Naive thymus-derived CD4-positive, alpha-beta T cell (primary cell): ENCODE measurements at regions of chr1 and their contacts with region 1.

Region 1: DNA sequence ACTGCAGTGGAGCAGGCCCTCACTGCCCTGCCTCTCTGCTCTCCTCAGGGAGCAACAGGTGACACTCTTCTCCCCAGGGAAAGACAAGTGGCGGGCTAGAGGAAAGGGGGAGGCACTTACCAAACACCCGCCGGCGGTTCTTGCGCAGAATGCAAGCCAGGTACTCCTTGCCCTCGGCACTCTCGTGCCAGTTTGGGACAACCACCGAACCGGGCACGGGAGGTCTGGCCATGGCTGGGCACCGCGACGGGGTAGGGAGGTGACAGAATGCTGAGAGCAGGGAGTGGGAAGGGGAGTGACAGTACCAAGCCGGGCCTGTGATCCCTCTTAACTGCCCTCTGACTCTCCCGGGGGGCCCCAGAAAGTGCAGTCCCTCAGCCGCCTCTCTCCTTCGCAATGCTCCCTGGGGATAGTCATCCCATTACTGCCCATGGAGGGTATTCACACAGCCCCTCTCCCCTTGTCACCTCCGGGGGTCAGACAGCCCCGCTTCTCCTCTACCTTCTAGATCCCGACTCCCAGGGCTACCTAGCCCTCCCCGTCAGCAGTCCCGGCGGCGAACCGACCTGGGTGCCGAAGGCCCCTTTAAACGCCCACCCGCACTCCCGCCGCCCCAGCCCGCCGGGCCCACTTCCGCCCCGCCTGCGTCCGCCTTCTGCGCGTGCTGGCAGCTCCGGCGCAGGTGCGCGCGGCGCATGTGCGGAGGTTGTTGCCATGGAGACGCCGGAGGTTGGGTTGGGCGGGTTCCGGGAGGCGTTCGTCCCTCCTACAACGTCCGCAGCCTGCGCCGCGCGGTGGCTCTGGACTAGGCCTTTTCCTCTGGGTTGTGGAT is at the start of gene CPLANE2:
- DNase-seq: peak; percentile 91 to 99 (median 94)
- ATAC-seq: peak; percentile 89
- H3K4me3 ChIP-seq: peak within 1 kb of the TSS; percentile 94
- H3K4me3 Mint-ChIP-seq: peak within 1 kb of the TSS; percentile 85 to 95 (median 92)
- H3K27ac ChIP-seq: peak within 1 kb of the TSS; percentile 78
- H3K27ac Mint-ChIP-seq: peak within 1 kb of the TSS; percentile 91 to 97 (median 95)
- H3K4me1 ChIP-seq: peaks cover 15 to 19% of the 10 kb centered on the region in 2 donors
- H3K4me1 Mint-ChIP-seq: peaks cover 0 to 28% (median 23%) of the 10 kb centered on the region in 7 donors
- H3K27me3 ChIP-seq: no peaks in the 10 kb centered on the region
- H3K27me3 Mint-ChIP-seq: no peaks in the 10 kb centered on the region
- total RNA-seq, gene CPLANE2: 6.6 to 11.4 (median 8.8) TPM

Region 2: GRCh38 chr1:16217061-16217785 is 19.5 kb before region 1 on chr1:
- CTCF ChIA-PET with region 1: no interaction called
- POLR2A ChIA-PET with region 1: interaction called, 7 read pairs
- intact Hi-C with region 1: loop called (anchors 1 kb)
- DNase-seq: peak; percentile 80 to 94 (median 89)
- ATAC-seq: peak; percentile 99
- H3K4me3 ChIP-seq: peak overlapping the region; percentile 67
- H3K4me3 Mint-ChIP-seq: peak overlapping the region; percentile 81 to 91 (median 88)
- H3K27ac ChIP-seq: peak overlapping the region; percentile 54
- H3K27ac Mint-ChIP-seq: peak overlapping the region in 8 of 9 donors; percentile 33 to 82 (median 68)
- H3K4me1 ChIP-seq: peaks cover 0 to 6% of the 10 kb centered on the region in 2 donors
- H3K4me1 Mint-ChIP-seq: peaks cover 9 to 30% (median 23%) of the 10 kb centered on the region in 7 donors
- H3K27me3 ChIP-seq: no peaks in the 10 kb centered on the region
- H3K27me3 Mint-ChIP-seq: peaks cover 0 to 11% (median 0%) of the 10 kb centered on the region in 5 donors

Region 3: GRCh38 chr1:16498573-16499413 is 262.1 kb after region 1 on chr1:
- CTCF ChIA-PET with region 1: interaction called, 3 read pairs
- POLR2A ChIA-PET with region 1: no interaction called
- intact Hi-C with region 1: loop called in 1 of 2 experiments (anchors 5 kb)
- DNase-seq: peak; percentile 64 to 91 (median 74)
- ATAC-seq: peak; percentile 94
- H3K4me3 ChIP-seq: peak overlapping the region; percentile 83
- H3K4me3 Mint-ChIP-seq: peak overlapping the region; percentile 83 to 95 (median 88)
- H3K27ac ChIP-seq: peak overlapping the region; percentile 56
- H3K27ac Mint-ChIP-seq: peak overlapping the region in 6 of 9 donors; percentile 38 to 85 (median 78)
- H3K4me1 ChIP-seq: no peaks in the 10 kb centered on the region
- H3K4me1 Mint-ChIP-seq: peaks cover 9 to 27% (median 20%) of the 10 kb centered on the region in 7 donors
- H3K27me3 ChIP-seq: no peaks in the 10 kb centered on the region
- H3K27me3 Mint-ChIP-seq: peaks cover 0 to 9% (median 0%) of the 10 kb centered on the region in 5 donors